ENCODE measurements at regions of chr19 and their contacts with region 1.

Region 1: DNA sequence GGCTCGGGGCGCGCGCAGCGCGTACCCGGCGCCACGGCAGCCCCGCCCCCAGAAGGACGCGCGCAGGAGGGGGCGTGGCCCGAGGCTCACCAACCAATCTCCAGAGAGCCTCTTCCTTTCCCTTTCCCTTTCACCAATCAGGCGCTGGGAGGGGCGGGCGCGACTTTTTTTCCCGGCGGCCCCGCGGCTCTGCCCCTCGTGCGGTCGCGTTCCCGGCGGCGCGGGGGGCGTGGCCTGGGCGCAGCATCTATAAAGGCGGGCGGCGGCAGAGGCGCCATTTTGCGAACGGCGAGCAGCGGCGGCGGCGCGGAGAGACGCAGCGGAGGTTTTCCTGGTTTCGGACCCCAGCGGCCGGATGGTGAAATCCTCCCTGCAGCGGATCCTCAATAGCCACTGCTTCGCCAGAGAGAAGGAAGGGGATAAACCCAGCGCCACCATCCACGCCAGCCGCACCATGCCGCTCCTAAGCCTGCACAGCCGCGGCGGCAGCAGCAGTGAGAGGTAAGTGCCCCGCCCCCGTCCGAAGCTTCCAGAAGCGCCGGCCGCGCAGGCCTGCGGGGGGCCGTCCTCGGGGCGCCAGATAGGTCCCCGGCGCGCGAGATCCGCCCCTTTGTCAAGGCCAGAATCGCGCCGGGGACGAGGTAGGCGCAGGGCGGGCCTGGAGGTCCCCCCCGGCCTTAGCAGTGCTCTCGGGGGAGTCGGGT is 12.6 kb downstream of the PEAK3 start:
- DNase-seq: peak; percentile 99
- H3K4me3 Mint-ChIP-seq: peak overlapping the region; percentile 89
- H3K27ac Mint-ChIP-seq: peak overlapping the region; percentile 86
- H3K4me1 Mint-ChIP-seq: peaks cover 26% of the 10 kb centered on the region
- H3K27me3 Mint-ChIP-seq: no peaks in the 10 kb centered on the region

Region 2: DNA sequence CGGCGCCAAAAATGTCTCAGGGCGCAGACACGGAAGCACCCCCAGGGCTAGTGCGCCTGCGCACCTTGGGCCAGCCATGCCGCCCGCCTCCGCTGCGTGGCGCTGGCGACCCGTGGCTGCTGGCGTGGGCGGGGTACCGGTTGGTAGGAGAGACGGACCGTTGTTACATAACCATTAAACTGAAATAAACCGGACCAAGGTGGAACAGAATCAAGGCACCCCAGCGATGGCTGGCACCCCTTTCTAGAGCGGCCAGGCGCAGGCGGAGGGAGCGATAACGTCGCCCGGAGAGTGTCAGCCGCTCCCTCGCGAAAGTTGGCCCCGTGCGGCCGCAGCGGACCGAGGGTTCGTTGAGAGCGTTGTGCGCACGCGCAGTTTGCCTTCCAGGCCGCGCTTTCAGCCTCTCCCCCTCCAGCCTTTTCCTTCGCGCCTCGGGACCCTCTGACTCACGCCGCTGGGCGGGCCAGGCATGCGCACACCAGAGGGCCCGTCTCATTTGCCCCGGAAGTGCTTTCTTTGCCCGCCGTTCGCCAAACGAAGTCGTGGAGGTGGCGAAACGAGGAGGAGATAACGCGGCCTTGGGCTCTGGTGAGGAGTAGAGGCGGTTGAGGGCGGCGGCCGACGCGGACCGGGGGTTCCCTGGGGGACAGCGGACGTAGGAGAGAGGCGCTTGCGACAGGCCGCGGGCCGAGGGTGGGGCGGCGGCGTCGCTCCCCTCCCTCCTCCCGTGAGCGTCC is 32.9 kb before region 1 on chr19 and contains the starts of genes PLEKHJ1 and SF3A2:
- intact Hi-C with region 1: loop called (anchors 1 kb)
- DNase-seq: peak; percentile 97
- H3K4me3 Mint-ChIP-seq: peak within 1 kb of the TSS; percentile 99
- H3K27ac Mint-ChIP-seq: peak within 1 kb of the TSS; percentile 99
- H3K4me1 Mint-ChIP-seq: peaks cover 43% of the 10 kb centered on the region
- H3K27me3 Mint-ChIP-seq: no peaks in the 10 kb centered on the region
- total RNA-seq, gene PLEKHJ1: 75.7 and 77.2 TPM in 2 replicates
- total RNA-seq, gene SF3A2: 153 and 154 TPM in 2 replicates

Region 3: DNA sequence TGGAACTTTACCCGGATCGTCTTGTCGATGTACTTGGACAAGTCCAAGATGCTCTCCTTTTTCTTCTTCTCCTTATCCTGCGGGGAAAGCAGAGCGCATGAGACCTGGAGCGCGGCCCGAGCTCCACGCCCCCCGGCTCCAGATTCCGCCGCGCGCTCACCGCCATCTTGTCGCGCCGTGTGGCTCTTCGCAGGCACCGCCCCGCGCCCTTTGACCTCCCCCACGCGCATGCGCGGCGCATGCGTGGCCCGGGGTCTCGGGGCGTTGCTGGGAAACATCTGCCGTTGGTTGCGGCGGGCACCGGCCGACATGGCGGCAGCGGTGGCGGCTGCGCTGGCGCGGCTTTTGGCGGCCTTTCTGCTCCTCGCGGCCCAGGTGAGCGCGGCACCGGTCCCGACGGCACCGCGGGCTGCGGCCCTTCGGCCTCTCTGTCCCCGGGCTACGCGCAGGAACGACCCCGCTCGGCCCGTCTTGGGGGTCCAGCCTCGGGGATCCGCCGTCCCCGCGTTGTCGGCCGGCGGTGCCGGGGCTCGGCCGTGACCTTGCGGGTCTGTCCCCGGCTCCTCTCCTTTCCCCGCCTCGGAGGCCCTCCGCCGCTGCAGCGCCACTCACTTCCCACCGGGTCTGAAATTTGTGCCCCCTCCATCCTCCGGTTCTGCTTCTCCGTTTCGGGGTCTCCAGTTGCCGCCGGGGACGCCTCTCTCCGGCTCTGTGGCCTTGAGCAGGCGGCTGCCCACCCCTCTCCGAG is 59.2 kb after region 1 on chr19 and contains the starts of genes LSM7 and SPPL2B:
- intact Hi-C with region 1: loop called (anchors 5 kb)
- DNase-seq: peak; percentile 90
- H3K4me3 Mint-ChIP-seq: peak within 1 kb of the TSS; percentile 100
- H3K27ac Mint-ChIP-seq: peak within 1 kb of the TSS; percentile 100
- H3K4me1 Mint-ChIP-seq: peaks cover 44% of the 10 kb centered on the region
- H3K27me3 Mint-ChIP-seq: no peaks in the 10 kb centered on the region
- total RNA-seq, gene LSM7: 142 and 171 TPM in 2 replicates
- total RNA-seq, gene SPPL2B: 60.8 and 69.5 TPM in 2 replicates

Region 4: DNA sequence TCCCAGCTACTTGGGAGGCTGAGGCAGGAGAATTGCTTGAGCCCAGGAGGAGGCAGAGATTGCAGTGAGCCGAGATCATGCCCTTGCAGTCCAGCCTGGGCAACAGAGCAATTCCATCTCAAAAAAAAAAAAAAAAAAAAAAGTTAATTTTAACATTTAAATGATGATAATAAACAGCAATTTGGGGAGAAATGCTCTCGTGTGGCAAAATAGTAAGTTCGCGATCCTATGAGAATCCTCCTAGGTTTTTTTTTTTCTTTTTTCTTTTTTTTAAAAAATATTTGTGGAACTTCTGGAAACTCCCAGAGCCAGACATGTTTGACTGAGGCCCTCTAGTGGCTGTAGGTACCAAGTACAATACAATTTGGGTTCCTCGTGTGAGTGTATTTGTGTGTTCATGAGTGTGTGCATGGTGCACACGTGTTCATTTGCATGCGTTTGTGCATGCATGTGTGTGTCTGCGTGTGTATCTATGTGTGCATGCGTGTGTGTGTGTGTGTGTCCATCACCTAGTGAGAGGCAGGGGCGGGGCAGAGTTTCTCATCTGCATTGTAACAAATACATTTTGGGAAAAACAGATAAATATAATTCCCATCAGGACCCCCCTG is 121.8 kb after region 1 on chr19:
- intact Hi-C with region 1: loop called (anchors 2 kb)
- DNase-seq: peak; percentile 20
- H3K4me3 Mint-ChIP-seq: no peak overlapping the region
- H3K27ac Mint-ChIP-seq: no peak overlapping the region
- H3K4me1 Mint-ChIP-seq: peaks cover 7% of the 10 kb centered on the region
- H3K27me3 Mint-ChIP-seq: peaks cover 4% of the 10 kb centered on the region

Region 5: DNA sequence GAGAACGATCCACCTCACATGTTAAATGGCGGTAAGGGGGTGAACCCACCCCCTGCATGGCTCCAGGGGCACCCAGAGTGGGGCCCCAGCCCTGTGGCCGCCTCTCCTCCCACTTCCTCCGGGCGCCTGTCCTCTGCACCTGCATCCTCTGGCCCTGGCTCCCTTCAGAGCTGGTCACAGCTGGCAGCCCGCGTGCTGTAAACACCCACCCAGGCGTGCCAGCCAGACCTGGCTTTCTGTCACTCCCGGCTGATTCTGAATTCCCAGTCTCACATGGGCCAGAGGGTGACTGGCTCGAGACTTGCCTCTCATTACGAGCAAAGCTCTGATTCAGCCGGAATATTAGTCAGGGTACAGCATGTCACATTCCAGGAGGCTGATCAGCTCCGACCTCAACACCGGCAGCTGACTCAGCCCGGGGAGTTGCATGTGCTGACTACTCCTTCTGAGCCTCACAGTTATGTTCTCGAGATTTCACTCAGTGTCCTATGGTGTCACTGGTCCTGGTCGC is 358.0 kb after region 1 on chr19:
- intact Hi-C with region 1: loop called (anchors 10 kb)
- DNase-seq: no peak
- H3K4me3 Mint-ChIP-seq: no peak overlapping the region
- H3K27ac Mint-ChIP-seq: peak overlapping the region; percentile 69
- H3K4me1 Mint-ChIP-seq: peaks cover 14% of the 10 kb centered on the region
- H3K27me3 Mint-ChIP-seq: no peaks in the 10 kb centered on the region